Dorsolateral prefrontal cortex (tissue), 120 donors: ENCODE measurements at regions of chr20 and their contacts with region 1.

Region 1: DNA sequence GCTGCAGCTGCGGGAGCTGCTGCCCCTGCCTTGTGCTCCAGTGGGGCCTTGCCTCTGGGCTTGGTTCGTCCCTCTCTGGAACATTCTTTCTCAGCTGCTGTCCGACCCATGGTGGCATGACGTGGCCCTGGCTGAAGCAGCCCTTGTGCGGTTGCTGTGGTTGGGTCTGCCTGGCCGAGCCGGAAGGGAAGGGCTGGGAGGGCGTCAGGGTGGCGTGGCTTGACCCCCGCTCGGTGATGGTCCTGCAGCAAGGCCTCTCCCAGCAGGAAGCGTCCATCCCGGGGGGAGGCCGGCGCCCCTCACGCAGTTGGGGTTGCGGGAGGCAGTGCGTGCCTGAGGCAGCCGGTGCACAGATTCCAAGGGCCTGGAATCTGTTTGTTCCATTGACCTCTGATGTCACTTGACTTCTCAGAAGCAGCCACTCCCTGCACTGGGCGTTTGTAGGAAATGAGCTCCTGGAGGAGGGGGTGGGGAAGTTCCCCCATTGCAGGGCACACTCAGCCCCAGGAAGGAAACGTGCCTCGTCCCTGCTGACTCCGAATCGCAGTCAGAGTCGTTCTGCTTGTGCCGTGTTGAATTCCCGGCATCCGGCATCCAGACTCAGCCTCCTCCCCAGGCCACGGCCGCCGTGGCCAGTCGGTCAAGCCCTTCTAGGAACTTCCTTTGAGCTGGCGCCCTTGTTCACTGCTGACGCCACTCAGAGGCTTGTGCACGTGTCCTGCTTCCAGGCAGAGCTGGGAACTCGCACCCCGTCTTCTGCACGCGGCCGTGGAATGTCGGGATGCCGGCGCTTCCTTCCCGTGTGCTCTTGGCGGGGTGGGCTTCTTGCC is 9.7 kb upstream of the TNFRSF6B start:
- DNase-seq: no peak
- H3K4me3 ChIP-seq: peak overlapping the region in 3 of 59 donors; percentile 7 to 11 (median 8)
- H3K27ac ChIP-seq: peak overlapping the region in 57 of 59 donors; percentile 10 to 91 (median 75)
- H3K27me3 ChIP-seq: no peaks in the 10 kb centered on the region
- CTCF ChIP-seq: no peak

Region 2: GRCh38 chr20:63767456-63767855 is 80.7 kb after region 1 on chr20:
- intact Hi-C with region 1: no loop called
- DNase-seq: peak in 1 of 10 donors; percentile 32
- H3K4me3 ChIP-seq: no peak overlapping the region
- H3K27ac ChIP-seq: peak overlapping the region in 1 of 59 donors; percentile 71
- H3K27me3 ChIP-seq: no peaks in the 10 kb centered on the region
- CTCF ChIP-seq: no peak

Region 3: DNA sequence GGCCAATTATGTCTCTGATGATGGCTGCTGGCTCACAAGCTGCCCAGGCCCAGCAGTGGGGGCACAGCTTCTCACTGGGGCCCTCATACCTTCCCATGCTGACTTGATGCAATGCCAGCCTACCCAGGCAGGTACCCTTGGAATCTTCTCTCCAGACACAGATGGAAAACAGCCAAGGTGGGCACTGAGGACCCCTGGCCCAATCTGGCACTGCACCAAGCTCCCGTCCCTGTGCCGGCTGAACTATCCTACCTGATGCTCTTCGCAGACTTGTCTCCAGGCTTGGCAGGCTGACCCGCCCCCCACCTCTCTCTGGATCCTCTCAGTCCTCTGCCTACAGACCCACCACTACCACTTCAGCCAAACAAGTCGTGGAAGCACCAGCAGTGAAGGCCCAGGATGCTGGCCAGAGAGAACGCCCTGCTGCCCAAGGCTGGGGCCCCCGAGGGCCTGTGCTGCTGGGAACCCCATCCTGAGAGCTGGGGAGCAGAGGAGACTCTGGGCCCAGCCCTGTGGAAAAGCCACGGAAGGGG is 281.8 kb after region 1 on chr20:
- intact Hi-C with region 1: no loop called
- DNase-seq: peak in 2 of 10 donors; percentile 35 to 36
- H3K4me3 ChIP-seq: peak overlapping the region; percentile 41 to 85 (median 69)
- H3K27ac ChIP-seq: peak overlapping the region in 50 of 59 donors; percentile 9 to 92 (median 77)
- H3K27me3 ChIP-seq: no peaks in the 10 kb centered on the region
- CTCF ChIP-seq: no peak

Region 4: DNA sequence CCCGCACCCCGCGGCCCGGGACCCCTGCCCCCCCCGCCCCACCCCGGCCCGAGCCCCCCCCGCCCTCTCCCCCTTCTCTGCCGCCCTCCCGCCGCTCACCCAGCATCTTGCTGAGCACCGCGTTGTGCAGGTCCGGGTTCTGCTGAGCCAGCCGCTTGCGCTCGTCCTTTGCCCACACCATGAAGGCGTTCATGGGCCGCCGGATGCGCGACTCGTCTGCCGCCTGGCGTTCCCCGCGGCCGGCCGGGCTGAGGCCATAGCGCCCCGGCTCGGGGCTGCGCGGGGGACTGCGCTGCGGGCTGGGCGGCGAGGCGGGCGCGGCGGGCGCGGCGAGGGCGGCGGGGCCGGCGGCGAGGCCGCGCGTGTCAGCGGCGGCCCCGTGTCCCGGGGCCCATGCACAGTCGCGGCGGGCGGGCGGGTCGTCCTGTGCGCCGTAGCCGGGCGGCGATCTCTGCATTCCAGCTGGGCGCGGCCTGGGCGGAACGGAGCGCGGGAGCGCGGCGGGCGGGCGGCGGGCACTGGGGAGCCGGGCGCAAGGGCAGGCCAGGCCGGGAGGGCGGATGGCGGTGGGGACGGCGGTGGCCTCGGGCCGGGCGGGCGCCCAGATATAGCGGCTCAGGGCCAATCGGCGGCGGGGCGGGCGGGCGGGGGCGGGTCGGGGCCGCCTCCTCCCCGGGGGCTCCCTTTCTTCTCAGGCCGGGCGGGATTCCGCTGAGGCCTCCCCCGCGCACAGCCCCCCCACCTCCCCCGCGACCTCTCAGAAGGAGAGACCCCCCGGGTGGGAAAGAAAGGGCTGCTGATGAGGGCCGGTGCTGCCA is 362.6 kb after region 1 on chr20 and contains the start of gene SOX18:
- intact Hi-C with region 1: loop called in 1 of 2 experiments (anchors 10 kb)
- DNase-seq: peak in 1 of 10 donors; percentile 48
- H3K4me3 ChIP-seq: peak within 1 kb of the TSS in 34 of 59 donors; percentile 4 to 54 (median 36)
- H3K27ac ChIP-seq: peak within 1 kb of the TSS in 29 of 59 donors; percentile 1 to 69 (median 43)
- H3K27me3 ChIP-seq: peaks cover 0 to 90% (median 63%) of the 10 kb centered on the region in 45 donors
- CTCF ChIP-seq: no peak
- total RNA-seq, gene SOX18: 2.1 to 27.7 (median 9.1) TPM